ENCODE measurements at regions of chr20 and their contacts with region 1.

Region 1: GRCh38 chr20:8399947-8400346 is 267.9 kb downstream of the PLCB1 start:
- DNase-seq: no peak
- ATAC-seq: peak; percentile 58
- H3K4me3 Mint-ChIP-seq: no peak overlapping the region
- H3K27ac Mint-ChIP-seq: no peak overlapping the region
- H3K4me1 Mint-ChIP-seq: peaks cover 6% of the 10 kb centered on the region
- H3K27me3 Mint-ChIP-seq: no peaks in the 10 kb centered on the region

Region 2: DNA sequence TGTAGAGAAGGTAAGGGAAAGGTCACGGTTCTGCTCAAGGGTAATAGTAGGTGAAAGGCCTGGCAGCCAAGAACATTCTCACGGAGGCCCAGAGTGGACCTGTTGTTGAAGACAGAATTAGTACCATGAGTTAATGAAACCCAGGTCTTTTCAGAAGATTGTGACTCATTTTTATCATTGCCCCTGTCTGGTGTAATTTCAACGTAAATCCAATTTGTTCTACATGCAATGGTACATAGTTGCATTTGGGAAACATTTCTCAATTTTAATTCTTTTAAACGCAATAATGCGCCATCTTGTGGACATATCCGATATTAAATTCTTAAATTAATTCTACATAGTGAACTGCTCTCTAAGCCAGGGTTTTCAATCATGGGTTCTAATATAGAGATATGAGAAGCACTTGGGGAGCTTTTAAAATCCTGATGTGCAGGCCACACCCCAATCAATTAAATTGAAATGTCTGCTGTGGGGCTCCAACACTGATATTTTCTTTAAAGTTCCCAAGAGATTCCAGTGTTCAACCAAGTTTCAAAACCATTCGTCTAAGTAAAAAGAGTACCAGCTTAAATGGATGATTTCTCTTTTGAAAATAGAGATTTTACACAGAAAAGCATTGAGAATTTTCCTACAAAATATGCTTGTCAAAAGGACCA is 10.4 kb before region 1 on chr20:
- CTCF ChIA-PET with region 1: interaction called, 13 read pairs
- POLR2A ChIA-PET with region 1: no interaction called
- intact Hi-C with region 1: no loop called
- DNase-seq: no peak
- ATAC-seq: no peak
- H3K4me3 Mint-ChIP-seq: no peak overlapping the region
- H3K27ac Mint-ChIP-seq: no peak overlapping the region
- H3K4me1 Mint-ChIP-seq: no peaks in the 10 kb centered on the region
- H3K27me3 Mint-ChIP-seq: peaks cover 2% of the 10 kb centered on the region

Measured in activated CD4-positive, alpha-beta T cell treated with anti-CD3 and anti-CD28 coated beads for 36 hours (primary cell).